ENCODE measurements at regions of chr1 and their contacts with region 1.

Region 1: GRCh38 chr1:201495471-201496295 is 11.2 kb downstream of the CSRP1 start:
- DNase-seq: no peak
- H3K4me3 ChIP-seq: no peak overlapping the region
- H3K4me3 Mint-ChIP-seq: no peak overlapping the region
- H3K27ac ChIP-seq: no peak overlapping the region
- H3K27ac Mint-ChIP-seq: peak overlapping the region in 1 of 7 donors; percentile 40
- H3K4me1 ChIP-seq: peaks cover 24 to 29% of the 10 kb centered on the region in 2 donors
- H3K4me1 Mint-ChIP-seq: peaks cover 34% of the 10 kb centered on the region
- H3K27me3 ChIP-seq: no peaks in the 10 kb centered on the region
- H3K27me3 Mint-ChIP-seq: peaks cover 0 to 6% (median 4%) of the 10 kb centered on the region in 3 donors
- CTCF ChIP-seq: no peak

Region 2: DNA sequence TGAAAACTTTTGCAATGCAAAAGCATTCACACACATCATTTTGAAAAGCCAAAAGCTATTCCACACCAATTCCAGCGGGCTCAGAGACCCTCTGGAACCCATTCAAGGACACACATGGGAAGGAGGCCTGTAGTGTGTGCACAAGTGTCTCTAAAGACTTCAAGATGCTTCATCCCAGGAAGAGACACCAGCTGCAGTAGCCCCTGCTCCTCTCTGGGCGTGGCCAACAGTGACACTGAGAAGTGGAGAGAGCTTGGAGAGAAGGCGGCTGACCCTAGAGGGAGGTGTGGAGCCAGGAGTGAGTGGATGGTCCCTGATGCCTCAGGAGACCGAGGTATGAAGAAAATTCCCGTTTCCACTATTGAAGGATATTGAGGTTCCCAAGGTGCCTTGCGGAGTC is 59.3 kb before region 1 on chr1:
- intact Hi-C with region 1: loop called in 1 of 2 experiments (anchors 10 kb)
- DNase-seq: no peak
- H3K4me3 ChIP-seq: no peak overlapping the region
- H3K4me3 Mint-ChIP-seq: no peak overlapping the region
- H3K27ac ChIP-seq: no peak overlapping the region
- H3K27ac Mint-ChIP-seq: no peak overlapping the region
- H3K4me1 ChIP-seq: peaks cover 3% of the 10 kb centered on the region in 2 donors
- H3K4me1 Mint-ChIP-seq: peaks cover 7% of the 10 kb centered on the region
- H3K27me3 ChIP-seq: no peaks in the 10 kb centered on the region
- H3K27me3 Mint-ChIP-seq: peaks cover 7 to 18% (median 14%) of the 10 kb centered on the region in 3 donors
- CTCF ChIP-seq: no peak

Region 3: DNA sequence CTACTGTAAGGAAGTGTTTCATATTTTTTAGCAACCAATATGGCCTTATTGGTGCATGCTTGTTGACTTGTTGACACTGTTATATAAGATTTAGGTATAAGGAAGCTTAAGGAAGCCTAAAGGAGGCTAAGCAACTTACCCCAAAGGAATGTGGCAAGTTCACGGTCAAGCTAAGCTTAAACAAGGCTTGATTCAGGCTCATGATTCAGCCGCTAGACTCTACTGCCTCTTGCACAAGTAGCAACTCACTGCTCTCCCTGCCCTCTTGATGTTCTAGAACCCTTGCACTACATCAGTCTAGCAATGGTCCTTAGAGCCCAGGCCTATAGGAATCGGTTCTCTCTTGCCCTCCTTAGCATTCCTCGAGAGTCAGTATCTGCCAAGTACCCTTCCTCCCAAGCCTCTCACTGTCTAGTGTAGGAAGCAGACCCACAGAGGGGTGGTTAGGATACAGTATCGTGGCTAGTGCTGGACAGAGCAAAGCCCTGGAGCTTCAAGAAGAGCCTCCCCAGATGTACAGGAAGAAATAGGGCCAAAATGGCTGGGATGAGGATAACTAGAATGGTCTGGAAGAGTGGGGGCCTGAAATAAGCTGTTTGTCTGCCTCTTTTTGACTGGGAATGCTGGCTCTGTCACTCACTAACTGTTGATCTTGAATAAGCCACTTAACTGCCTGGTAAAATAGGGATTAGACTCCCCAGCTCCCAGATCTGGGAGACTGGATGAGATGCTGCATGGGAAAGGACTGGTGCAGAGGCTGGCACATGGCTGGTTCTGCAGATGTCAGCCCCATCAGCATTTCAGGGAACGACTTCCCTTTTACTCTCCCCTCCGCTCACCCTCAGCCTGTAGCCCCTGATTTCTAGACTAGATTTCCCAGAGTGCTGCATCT is 165.5 kb after region 1 on chr1:
- intact Hi-C with region 1: no loop called
- DNase-seq: no peak
- H3K4me3 ChIP-seq: no peak overlapping the region
- H3K4me3 Mint-ChIP-seq: no peak overlapping the region
- H3K27ac ChIP-seq: no peak overlapping the region
- H3K27ac Mint-ChIP-seq: no peak overlapping the region
- H3K4me1 ChIP-seq: no peaks in the 10 kb centered on the region
- H3K4me1 Mint-ChIP-seq: no peaks in the 10 kb centered on the region
- H3K27me3 ChIP-seq: no peaks in the 10 kb centered on the region
- H3K27me3 Mint-ChIP-seq: peaks cover 0 to 3% (median 2%) of the 10 kb centered on the region in 3 donors
- CTCF ChIP-seq: no peak

Measured in CD14-positive monocyte (primary cell).